ENCODE measurements at regions of chr22 and their contacts with region 1.

Region 1: DNA sequence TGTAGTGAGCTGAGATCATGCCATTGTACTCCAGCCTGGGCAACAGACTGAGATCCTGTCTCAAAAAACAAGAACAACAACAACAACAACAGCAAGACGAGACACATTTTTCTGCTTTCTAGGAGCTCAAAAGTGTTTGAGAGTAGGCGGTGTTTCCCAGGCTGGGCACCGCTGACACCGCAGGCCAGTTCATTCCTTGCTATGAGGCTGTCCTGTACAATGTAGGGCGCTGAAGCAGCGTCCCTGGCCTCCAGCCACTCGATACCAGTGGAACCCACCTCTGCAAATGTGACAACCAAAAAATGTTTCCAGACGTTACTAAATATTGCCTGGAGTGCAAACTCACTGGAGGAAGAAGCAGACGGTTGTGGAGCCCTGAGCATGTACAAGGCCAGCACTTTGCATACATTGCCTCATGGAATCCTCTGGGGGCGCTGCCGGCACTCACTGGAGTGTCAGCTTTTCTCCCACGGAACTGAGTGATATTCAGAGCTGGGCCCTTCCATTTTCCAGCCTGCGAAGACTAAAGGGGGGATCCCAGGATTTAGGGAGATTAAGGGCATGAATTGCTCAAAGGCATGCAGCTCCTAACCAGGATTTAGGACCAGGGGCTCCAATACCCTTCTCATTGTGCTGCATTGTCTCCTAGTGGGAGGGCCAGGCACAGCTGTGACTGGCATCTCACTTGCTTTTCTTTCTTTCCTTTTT is 5.8 kb upstream of the MIEF1 start:
- DNase-seq: peak; percentile 50
- H3K4me3 ChIP-seq: no peak overlapping the region
- H3K27ac ChIP-seq: no peak overlapping the region; a peak in 1 of 4 replicates
- H3K4me1 ChIP-seq: peaks cover 0 to 19% of the 10 kb centered on the region in 2 experiments; a peak in 2 of 4 replicates
- H3K27me3 ChIP-seq: no peaks in the 10 kb centered on the region
- CTCF ChIP-seq: peak; percentile 59
- EP300 ChIP-seq: no peak
- RAD21 ChIP-seq: peak; percentile 48

Region 2: GRCh38 chr22:39368461-39368911 is 127.8 kb before region 1 on chr22:
- CTCF ChIA-PET with region 1: no interaction called
- POLR2A ChIA-PET with region 1: no interaction called
- DNase-seq: no peak
- H3K4me3 ChIP-seq: no peak overlapping the region
- H3K27ac ChIP-seq: no peak overlapping the region
- H3K4me1 ChIP-seq: peaks cover 0 to 11% of the 10 kb centered on the region in 2 experiments; a peak in 1 of 4 replicates
- H3K27me3 ChIP-seq: no peaks in the 10 kb centered on the region
- CTCF ChIP-seq: no peak
- EP300 ChIP-seq: no peak
- RAD21 ChIP-seq: no peak

Region 3: GRCh38 chr22:39514373-39514973 is 18.2 kb after region 1 on chr22:
- CTCF ChIA-PET with region 1: interaction called, 18 read pairs
- POLR2A ChIA-PET with region 1: interaction called, 12 read pairs
- DNase-seq: peak; percentile 47
- H3K4me3 ChIP-seq: no peak overlapping the region
- H3K27ac ChIP-seq: no peak overlapping the region
- H3K4me1 ChIP-seq: peaks cover 7 to 8% of the 10 kb centered on the region in 2 experiments; a peak in 2 of 4 replicates
- H3K27me3 ChIP-seq: no peaks in the 10 kb centered on the region
- CTCF ChIP-seq: peak; percentile 61
- EP300 ChIP-seq: no peak
- RAD21 ChIP-seq: peak; percentile 50

Region 4: DNA sequence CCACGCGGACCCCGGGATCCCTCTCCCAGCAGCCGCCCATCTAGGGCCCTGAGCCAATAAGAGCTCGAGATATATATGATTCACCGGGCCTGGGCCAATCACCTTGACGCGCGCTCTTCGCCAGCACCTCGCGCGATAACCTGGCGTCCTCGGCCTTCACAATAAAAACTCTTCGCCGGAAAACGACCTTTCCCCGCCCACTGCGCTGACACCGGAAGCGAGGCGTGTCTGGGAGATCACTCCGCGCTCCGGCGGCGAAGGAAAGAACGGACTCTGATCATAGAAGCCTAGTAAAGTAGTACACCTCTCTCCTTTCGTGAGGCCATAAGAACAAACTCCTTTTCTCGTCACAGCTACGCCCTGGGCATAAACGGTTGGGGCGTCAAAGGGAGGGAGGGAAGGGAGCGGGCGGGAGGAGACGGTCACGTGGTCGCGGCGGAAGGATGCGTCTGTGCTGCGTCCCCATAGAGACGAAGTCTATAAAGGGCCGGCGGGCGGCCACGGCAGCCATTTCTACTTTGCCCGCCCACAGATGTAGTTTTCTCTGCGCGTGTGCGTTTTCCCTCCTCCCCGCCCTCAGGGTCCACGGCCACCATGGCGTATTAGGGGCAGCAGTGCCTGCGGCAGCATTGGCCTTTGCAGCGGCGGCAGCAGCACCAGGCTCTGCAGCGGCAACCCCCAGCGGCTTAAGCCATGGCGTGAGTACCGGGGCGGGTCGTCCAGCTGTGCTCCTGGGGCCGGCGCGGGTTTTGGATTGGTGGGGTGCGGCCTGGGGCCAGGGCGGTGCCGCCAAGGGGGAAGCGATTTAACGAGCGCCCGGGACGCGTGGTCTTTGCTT is 24.0 kb after region 1 on chr22 and contains the start of gene ATF4:
- CTCF ChIA-PET with region 1: interaction called, 18 read pairs
- POLR2A ChIA-PET with region 1: interaction called, 12 read pairs
- DNase-seq: peak; percentile 91
- H3K4me3 ChIP-seq: peak within 1 kb of the TSS; percentile 70 to 76
- H3K27ac ChIP-seq: peak within 1 kb of the TSS; percentile 92 to 93
- H3K4me1 ChIP-seq: peaks cover 8 to 21% of the 10 kb centered on the region in 2 experiments; a peak in 2 of 4 replicates
- H3K27me3 ChIP-seq: no peaks in the 10 kb centered on the region
- CTCF ChIP-seq: no peak
- EP300 ChIP-seq: no peak
- RAD21 ChIP-seq: no peak
- polyA plus RNA-seq, gene ATF4: 375 and 436 TPM in 2 replicates

Region 5: GRCh38 chr22:39559454-39560105 is 63.3 kb after region 1 on chr22:
- CTCF ChIA-PET with region 1: no interaction called
- POLR2A ChIA-PET with region 1: no interaction called
- DNase-seq: peak; percentile 42
- H3K4me3 ChIP-seq: no peak overlapping the region
- H3K27ac ChIP-seq: no peak overlapping the region
- H3K4me1 ChIP-seq: no peaks in the 10 kb centered on the region; a peak in 1 of 4 replicates
- H3K27me3 ChIP-seq: no peaks in the 10 kb centered on the region; the same call in 1 of the 2 replicates
- CTCF ChIP-seq: peak; percentile 46
- EP300 ChIP-seq: no peak
- RAD21 ChIP-seq: no peak

Measured in SK-N-SH (cell line).